ENCODE measurements at regions of chr1 and their contacts with region 1.

Region 1: DNA sequence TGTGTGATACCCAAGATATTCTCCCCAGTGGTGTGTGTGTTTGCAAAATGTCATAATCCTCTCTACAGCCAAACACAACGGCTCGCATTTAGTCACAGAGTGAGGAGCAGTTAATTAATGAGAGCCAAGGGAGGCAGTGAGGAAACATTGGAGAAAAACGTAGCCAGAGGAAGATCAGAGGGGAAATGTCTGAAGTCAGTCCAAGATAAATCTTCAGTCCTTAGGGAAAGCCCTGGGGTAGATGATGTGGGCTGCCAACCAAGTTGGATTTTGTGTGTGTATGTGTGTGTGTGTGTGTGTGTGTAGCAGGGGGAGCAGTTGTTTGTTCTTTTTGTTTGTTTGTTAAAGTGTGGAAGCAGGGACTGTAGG is 201.0 kb upstream of the PTBP2 start:
- DNase-seq: no peak
- H3K4me3 Mint-ChIP-seq: no peak overlapping the region
- H3K27ac Mint-ChIP-seq: no peak overlapping the region
- H3K4me1 Mint-ChIP-seq: no peaks in the 10 kb centered on the region
- H3K27me3 Mint-ChIP-seq: peaks cover 1% of the 10 kb centered on the region

Region 2: DNA sequence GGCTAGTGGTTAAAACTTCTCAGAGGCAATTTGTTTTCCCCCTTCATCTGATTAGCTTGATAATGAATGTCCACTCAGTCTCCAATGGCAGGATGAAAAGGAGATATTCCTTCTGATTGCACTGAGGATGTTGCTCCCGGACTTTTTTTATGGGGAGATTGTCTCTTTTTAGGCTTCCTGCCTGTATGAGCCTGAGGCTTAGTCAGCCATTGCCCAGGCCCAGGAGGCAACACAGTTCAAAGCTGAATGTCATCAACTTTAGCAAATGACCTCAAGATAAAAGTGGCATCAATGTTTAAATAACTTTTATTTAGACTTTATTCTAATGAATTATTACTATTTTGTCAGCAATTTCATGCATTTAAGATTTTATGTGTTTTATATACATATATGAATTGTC is 38.1 kb after region 1 on chr1:
- intact Hi-C with region 1: loop called (anchors 1 kb)
- DNase-seq: no peak
- H3K4me3 Mint-ChIP-seq: no peak overlapping the region
- H3K27ac Mint-ChIP-seq: no peak overlapping the region
- H3K4me1 Mint-ChIP-seq: no peaks in the 10 kb centered on the region
- H3K27me3 Mint-ChIP-seq: no peaks in the 10 kb centered on the region

Measured in activated T-helper 1 cell treated with anti-CD3 and anti-CD28 coated beads, Interleukin-12 subunit alpha, Interleukin-12 subunit beta, Interleukin-2, Interleukin-4 antibody, amounts not matched to agents 30 ng/mL and 10 ng/mL and 1 ng/mL, durations not matched to agents 14 hours and 24 hours and 36 hours (primary cell).